ENCODE measurements at regions of chr22 and their contacts with region 1.

Region 1: GRCh38 chr22:35524966-35525686 is 15.5 kb upstream of the RASD2 start:
- DNase-seq: peak in 1 of 2 donors; percentile 73
- ATAC-seq: peak in 2 of 4 donors; percentile 40 to 65
- H3K4me3 ChIP-seq: peak overlapping the region; percentile 10
- H3K27ac ChIP-seq: no peak overlapping the region
- H3K4me1 ChIP-seq: no peaks in the 10 kb centered on the region
- H3K27me3 ChIP-seq: no peaks in the 10 kb centered on the region
- CTCF ChIP-seq: no peak

Region 2: DNA sequence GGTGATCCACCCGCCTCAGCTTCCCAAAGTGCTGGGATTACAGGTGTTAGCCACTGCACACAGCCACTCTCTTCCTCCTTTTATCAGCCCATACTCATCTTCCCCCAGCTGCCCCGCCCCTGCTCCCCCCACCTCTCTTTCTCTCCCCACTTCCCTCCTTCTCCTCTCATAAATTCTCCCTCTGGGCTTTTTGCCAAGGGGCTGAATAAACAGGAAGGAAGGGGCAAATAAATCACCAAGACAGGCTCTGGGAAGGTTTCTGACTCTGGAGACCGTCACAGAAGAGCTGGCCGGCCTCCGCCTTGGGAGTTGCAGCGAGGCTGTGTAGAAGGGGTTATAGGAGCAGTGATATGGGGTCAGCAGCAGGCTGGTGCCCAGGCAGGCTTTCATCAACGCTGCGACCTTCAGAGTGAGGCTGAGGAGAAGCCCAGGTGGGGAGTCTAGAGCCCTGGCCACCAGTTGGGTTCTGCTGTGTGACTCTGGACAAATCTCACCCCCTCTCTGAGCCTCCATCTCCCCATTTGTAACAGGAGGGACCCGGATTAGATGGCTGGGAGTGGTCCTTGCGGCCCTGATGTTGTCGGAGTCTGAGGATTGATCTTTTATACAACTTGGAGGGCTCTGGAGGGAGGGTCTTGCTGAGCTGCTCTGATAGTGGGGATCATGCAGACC is 47.1 kb before region 1 on chr22:
- intact Hi-C with region 1: no loop called
- DNase-seq: peak; percentile 55 to 78
- ATAC-seq: peak in 3 of 4 donors; percentile 30 to 55 (median 51)
- H3K4me3 ChIP-seq: no peak overlapping the region
- H3K27ac ChIP-seq: peak overlapping the region; percentile 23
- H3K4me1 ChIP-seq: peaks cover 15% of the 10 kb centered on the region
- H3K27me3 ChIP-seq: no peaks in the 10 kb centered on the region
- CTCF ChIP-seq: no peak

Region 3: GRCh38 chr22:35589071-35589952 is 64.2 kb after region 1 on chr22:
- intact Hi-C with region 1: no loop called
- DNase-seq: peak; percentile 84 to 92
- ATAC-seq: peak; percentile 73 to 79 (median 77)
- H3K4me3 ChIP-seq: no peak overlapping the region
- H3K27ac ChIP-seq: peak overlapping the region; percentile 97
- H3K4me1 ChIP-seq: peaks cover 64% of the 10 kb centered on the region
- H3K27me3 ChIP-seq: no peaks in the 10 kb centered on the region
- CTCF ChIP-seq: no peak

Region 4: DNA sequence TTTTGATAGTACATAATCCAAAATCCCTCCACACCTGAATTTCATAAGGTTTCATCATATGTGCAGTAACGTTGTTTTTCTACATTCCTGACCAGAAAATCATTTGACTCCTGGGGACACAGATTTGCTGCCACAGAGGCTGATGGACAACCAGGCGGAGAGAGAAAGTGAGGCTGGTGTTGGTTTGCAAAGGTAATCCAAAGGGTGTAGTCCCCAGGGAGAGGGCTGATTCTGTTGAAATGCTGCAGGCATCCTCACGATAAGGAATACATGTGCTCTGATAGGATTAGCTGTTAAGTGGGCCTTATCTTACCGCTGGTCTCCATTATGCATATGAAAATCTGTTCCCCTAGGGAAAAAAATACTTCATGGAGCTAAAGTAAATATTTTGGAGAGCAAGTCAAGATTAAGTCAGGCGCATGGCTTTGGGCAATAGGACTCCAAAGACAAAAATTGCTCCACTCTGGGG is 131.2 kb after region 1 on chr22:
- intact Hi-C with region 1: loop called in 1 of 2 experiments (anchors 5 kb)
- DNase-seq: no peak
- ATAC-seq: no peak
- H3K4me3 ChIP-seq: no peak overlapping the region
- H3K27ac ChIP-seq: no peak overlapping the region
- H3K4me1 ChIP-seq: no peaks in the 10 kb centered on the region
- H3K27me3 ChIP-seq: no peaks in the 10 kb centered on the region
- CTCF ChIP-seq: no peak

Region 5: GRCh38 chr22:35684270-35684700 is 159.2 kb after region 1 on chr22:
- intact Hi-C with region 1: no loop called
- DNase-seq: no peak
- ATAC-seq: peak; percentile 91 to 98 (median 96)
- H3K4me3 ChIP-seq: no peak overlapping the region
- H3K27ac ChIP-seq: peak overlapping the region; percentile 92
- H3K4me1 ChIP-seq: peaks cover 19% of the 10 kb centered on the region
- H3K27me3 ChIP-seq: no peaks in the 10 kb centered on the region
- CTCF ChIP-seq: peak; percentile 31

Region 6: DNA sequence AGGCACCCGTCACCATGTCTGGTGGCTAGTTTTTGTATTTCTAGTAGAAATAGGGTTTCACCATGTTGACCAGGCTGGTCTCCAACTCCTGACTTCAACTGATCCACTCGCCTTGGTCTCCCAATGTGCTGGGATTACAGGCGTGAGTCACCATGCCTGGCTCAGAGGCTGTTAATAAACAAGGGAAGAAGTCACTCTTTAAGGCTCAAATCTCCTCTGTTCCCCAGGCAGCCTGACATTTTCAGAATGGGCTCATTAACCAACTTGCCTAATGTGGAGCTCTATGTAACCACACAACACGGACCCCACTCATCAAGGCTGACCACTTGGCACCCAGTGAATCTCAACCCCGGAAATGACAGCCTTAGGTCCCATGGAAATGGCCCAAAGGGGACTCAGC is 611.3 kb after region 1 on chr22:
- intact Hi-C with region 1: no loop called
- DNase-seq: peak; percentile 71 to 77
- ATAC-seq: peak in 3 of 4 donors; percentile 35 to 63 (median 42)
- H3K4me3 ChIP-seq: no peak overlapping the region
- H3K27ac ChIP-seq: no peak overlapping the region
- H3K4me1 ChIP-seq: no peaks in the 10 kb centered on the region
- H3K27me3 ChIP-seq: no peaks in the 10 kb centered on the region
- CTCF ChIP-seq: no peak